Endothelial cell of umbilical vein (primary cell): ENCODE measurements at regions of chr2 and their contacts with region 1.

Region 1: DNA sequence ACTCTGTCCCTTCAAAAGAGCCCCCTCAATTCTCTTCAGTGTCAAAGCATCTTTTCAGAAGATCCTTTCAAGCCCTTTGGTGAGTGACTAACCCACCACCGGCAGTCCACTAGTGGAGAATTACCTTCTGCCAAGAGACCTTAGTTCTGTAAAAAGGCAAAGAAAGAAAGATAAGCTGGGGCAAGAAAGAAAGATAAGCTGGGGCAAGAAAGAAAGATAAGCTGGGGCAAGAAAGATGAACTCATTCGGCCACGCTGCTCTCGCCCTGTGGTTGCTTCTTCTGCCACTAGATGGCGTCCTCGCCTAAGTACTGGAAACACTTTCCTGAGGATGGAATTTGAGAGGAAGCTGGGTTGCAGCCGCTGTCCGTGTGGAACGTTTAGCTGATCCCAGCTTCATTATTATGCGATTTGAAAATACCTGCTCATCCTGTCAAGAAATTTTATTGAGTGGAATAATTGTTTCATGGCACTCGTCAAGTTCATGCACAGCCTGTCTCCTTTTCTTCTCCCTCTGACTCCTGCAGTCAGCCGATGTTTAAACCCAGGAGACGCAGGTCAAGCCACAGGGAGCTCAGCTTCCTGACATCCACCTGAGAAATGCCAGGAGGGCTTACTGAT is 17.3 kb upstream of the ANXA4 start:
- DNase-seq: peak; percentile 80
- H3K4me3 ChIP-seq: peak overlapping the region in 1 of 3 experiments; percentile 55
- H3K27ac ChIP-seq: no peak overlapping the region
- H3K4me1 ChIP-seq: peaks cover 2% of the 10 kb centered on the region
- H3K27me3 ChIP-seq: no peaks in the 10 kb centered on the region
- CTCF ChIP-seq: peak; percentile 87 to 88
- POLR2A ChIP-seq: no peak

Region 2: GRCh38 chr2:69100220-69100723 is 624.4 kb before region 1 on chr2:
- CTCF ChIA-PET with region 1: no interaction called
- POLR2A ChIA-PET with region 1: no interaction called
- dilution Hi-C with region 1: no loop called
- intact Hi-C with region 1: no loop called
- DNase-seq: no peak
- H3K4me3 ChIP-seq: no peak overlapping the region
- H3K27ac ChIP-seq: no peak overlapping the region
- H3K4me1 ChIP-seq: peaks cover 9% of the 10 kb centered on the region
- H3K27me3 ChIP-seq: no peaks in the 10 kb centered on the region
- CTCF ChIP-seq: no peak
- POLR2A ChIP-seq: no peak

Region 3: DNA sequence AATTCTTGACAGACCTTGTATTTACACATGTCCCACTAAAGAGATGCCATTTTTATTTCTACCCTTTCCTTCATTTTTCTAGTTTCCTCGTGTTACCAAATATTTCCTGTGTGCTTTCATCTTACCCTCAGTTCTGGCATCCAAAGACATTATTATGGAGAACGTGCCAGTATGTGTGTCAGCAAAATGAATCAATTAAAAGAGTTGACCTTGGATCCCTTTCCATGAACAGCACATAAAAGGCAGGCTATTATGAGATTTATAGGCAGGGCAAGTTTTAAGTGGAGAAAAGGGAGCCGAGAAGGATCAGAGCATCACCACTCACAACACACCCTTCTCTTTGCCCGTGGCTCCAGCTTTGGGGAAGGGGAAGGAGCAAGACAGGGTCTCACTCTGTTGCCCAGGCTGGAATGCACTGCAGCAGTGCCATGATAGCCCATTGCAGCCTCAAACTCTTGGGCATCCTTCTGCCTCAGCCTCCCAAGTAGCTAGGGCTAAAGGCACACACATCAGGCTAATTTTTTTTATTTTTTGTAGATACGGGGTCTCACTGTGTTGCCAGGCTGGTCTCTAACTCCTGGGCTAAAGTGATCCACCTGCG is 487.5 kb before region 1 on chr2:
- CTCF ChIA-PET with region 1: no interaction called
- POLR2A ChIA-PET with region 1: no interaction called
- dilution Hi-C with region 1: no loop called
- intact Hi-C with region 1: no loop called
- DNase-seq: peak; percentile 37
- H3K4me3 ChIP-seq: no peak overlapping the region
- H3K27ac ChIP-seq: no peak overlapping the region
- H3K4me1 ChIP-seq: no peaks in the 10 kb centered on the region
- H3K27me3 ChIP-seq: no peaks in the 10 kb centered on the region
- CTCF ChIP-seq: no peak
- POLR2A ChIP-seq: no peak

Region 4: GRCh38 chr2:69428981-69429380 is 295.7 kb before region 1 on chr2:
- CTCF ChIA-PET with region 1: no interaction called
- POLR2A ChIA-PET with region 1: no interaction called
- dilution Hi-C with region 1: no loop called
- intact Hi-C with region 1: no loop called
- DNase-seq: no peak
- H3K4me3 ChIP-seq: no peak overlapping the region
- H3K27ac ChIP-seq: no peak overlapping the region
- H3K4me1 ChIP-seq: no peaks in the 10 kb centered on the region
- H3K27me3 ChIP-seq: no peaks in the 10 kb centered on the region
- CTCF ChIP-seq: no peak
- POLR2A ChIP-seq: no peak

Region 5: DNA sequence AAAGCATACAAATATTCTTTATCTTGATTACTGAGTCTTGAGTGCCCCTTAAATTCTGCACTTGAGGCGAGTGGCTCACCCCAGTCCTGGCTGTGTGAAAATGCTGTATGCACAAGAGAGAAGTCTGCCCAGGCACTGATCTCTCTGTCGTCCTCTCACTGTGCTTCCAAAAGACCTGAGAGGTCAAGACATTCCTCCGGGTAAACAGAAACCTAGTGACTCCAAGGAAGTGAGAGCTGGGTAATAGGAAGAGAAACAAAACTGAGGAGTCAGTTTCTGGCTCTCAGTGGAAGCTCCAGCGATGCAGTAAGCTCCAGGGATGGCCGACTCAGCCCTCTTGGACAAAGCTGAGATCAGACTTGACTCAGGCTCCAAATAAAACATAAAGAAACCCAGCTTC is 152.0 kb before region 1 on chr2:
- CTCF ChIA-PET with region 1: interaction called, 14 read pairs
- POLR2A ChIA-PET with region 1: no interaction called
- dilution Hi-C with region 1: no loop called
- intact Hi-C with region 1: no loop called
- DNase-seq: peak; percentile 16
- H3K4me3 ChIP-seq: no peak overlapping the region
- H3K27ac ChIP-seq: no peak overlapping the region
- H3K4me1 ChIP-seq: peaks cover 2% of the 10 kb centered on the region
- H3K27me3 ChIP-seq: no peaks in the 10 kb centered on the region
- CTCF ChIP-seq: no peak
- POLR2A ChIP-seq: no peak

Region 6: GRCh38 chr2:69750246-69750645 is 25.6 kb after region 1 on chr2:
- CTCF ChIA-PET with region 1: interaction called, 42 read pairs
- POLR2A ChIA-PET with region 1: no interaction called
- dilution Hi-C with region 1: no loop called
- intact Hi-C with region 1: no loop called
- DNase-seq: no peak
- H3K4me3 ChIP-seq: no peak overlapping the region
- H3K27ac ChIP-seq: no peak overlapping the region
- H3K4me1 ChIP-seq: no peaks in the 10 kb centered on the region
- H3K27me3 ChIP-seq: no peaks in the 10 kb centered on the region
- CTCF ChIP-seq: no peak
- POLR2A ChIP-seq: no peak

Region 7: GRCh38 chr2:69798909-69799526 is 74.4 kb after region 1 on chr2:
- CTCF ChIA-PET with region 1: interaction called, 24 read pairs
- POLR2A ChIA-PET with region 1: no interaction called
- dilution Hi-C with region 1: no loop called
- intact Hi-C with region 1: no loop called
- DNase-seq: peak; percentile 77
- H3K4me3 ChIP-seq: peak overlapping the region in 2 of 3 experiments; percentile 2 to 61
- H3K27ac ChIP-seq: peak overlapping the region; percentile 69
- H3K4me1 ChIP-seq: peaks cover 20% of the 10 kb centered on the region
- H3K27me3 ChIP-seq: no peaks in the 10 kb centered on the region
- CTCF ChIP-seq: no peak
- POLR2A ChIP-seq: no peak

Region 8: GRCh38 chr2:69858261-69858660 is 133.6 kb after region 1 on chr2:
- CTCF ChIA-PET with region 1: interaction called, 26 read pairs
- POLR2A ChIA-PET with region 1: no interaction called
- dilution Hi-C with region 1: no loop called
- intact Hi-C with region 1: no loop called
- DNase-seq: no peak
- H3K4me3 ChIP-seq: no peak overlapping the region
- H3K27ac ChIP-seq: no peak overlapping the region
- H3K4me1 ChIP-seq: no peaks in the 10 kb centered on the region
- H3K27me3 ChIP-seq: no peaks in the 10 kb centered on the region
- CTCF ChIP-seq: no peak
- POLR2A ChIP-seq: no peak

Region 9: GRCh38 chr2:69914170-69914960 is 189.7 kb after region 1 on chr2:
- CTCF ChIA-PET with region 1: interaction called, 41 read pairs
- POLR2A ChIA-PET with region 1: no interaction called
- dilution Hi-C with region 1: no loop called
- intact Hi-C with region 1: loop called (anchors 1 kb)
- DNase-seq: peak; percentile 100
- H3K4me3 ChIP-seq: peak overlapping the region; percentile 62 to 76 (median 65)
- H3K27ac ChIP-seq: peak overlapping the region; percentile 84
- H3K4me1 ChIP-seq: peaks cover 35% of the 10 kb centered on the region
- H3K27me3 ChIP-seq: no peaks in the 10 kb centered on the region
- CTCF ChIP-seq: peak in 1 of 2 donors; percentile 25
- POLR2A ChIP-seq: peak; percentile 84